Pancreas (tissue), 10 donors: ENCODE measurements at regions of chr15 and their contacts with region 1.

Region 1: DNA sequence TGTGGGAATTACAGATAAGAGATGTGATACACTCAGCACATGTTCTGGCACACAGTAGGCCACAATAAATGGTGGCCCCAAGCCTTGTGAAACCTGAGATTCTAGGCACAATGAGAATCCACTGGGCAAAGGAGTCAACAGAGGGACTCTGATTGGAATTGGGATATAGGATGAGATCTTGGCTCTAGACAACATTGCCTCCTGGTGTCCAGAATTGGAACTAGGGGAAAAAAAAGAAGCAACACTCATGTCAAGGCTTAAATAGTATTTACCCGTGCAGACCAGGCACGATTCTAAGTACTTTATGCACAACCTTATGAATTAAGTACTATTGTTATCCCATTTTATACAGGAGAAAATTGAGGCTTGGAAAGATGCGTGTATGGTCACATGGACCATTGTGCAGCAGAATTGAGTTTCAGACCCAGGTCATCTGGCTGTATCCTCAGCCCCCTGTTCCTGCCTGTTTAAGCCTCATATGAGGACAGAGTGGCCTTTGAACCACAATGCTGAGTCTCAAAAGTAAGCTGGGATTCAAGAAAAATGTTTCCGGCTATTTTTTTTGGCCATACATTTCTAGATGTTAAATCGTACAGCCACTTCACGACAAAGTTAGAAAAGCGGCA is 124.8 kb downstream of the SV2B start:
- DNase-seq: peak in 1 of 6 donors; percentile 39
- ATAC-seq: peak in 3 of 4 donors; percentile 86 to 90 (median 87)
- H3K4me3 ChIP-seq: no peak overlapping the region
- H3K27ac ChIP-seq: no peak overlapping the region
- H3K4me1 ChIP-seq: no peaks in the 10 kb centered on the region
- H3K27me3 ChIP-seq: no peaks in the 10 kb centered on the region
- CTCF ChIP-seq: peak; percentile 41 to 69 (median 60)

Region 2: GRCh38 chr15:91049378-91050127 is 175.3 kb before region 1 on chr15:
- intact Hi-C with region 1: loop called in 1 of 3 experiments (anchors 10 kb)
- DNase-seq: peak in 3 of 6 donors; percentile 45 to 76 (median 49)
- ATAC-seq: peak; percentile 90 to 99 (median 97)
- H3K4me3 ChIP-seq: no peak overlapping the region
- H3K27ac ChIP-seq: no peak overlapping the region
- H3K4me1 ChIP-seq: no peaks in the 10 kb centered on the region
- H3K27me3 ChIP-seq: no peaks in the 10 kb centered on the region
- CTCF ChIP-seq: peak in 3 of 4 donors; percentile 26 to 50 (median 34)

Region 3: DNA sequence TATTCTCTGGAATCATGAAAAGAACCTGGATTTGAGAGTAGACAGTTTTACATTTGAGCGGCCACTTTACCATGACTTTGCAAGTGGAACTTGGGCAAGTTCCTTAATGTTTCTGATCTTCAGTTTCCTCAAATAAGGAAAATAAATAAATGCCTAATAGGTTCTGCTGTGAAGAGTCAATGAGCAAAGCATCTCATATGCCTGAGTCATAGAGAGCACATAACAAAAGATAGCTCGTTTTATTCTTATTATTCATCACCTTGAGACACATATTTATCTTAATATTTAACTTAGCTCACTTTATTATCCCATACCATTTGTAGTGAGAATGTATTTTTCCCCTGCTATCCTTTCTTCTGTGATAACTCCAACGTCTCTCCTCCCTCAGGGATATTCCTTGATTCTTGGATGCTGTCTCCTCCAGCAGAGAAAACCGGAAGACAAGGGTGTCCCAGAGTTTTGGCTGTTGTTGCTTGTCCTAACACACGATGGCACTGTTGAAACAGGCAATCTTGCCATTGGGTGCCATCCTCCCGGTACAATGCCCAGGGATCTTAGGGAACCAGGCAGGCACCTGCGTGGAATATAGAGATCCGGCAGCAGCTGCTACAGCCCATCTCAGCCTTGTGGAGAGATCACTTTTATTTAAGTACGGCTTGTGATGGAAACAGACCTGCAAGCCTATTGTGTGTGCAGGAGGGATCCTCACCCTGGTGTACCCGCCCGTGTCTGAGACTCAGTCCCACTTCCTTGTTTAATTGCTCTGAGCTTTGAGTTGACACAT is 169.1 kb before region 1 on chr15:
- intact Hi-C with region 1: loop called (anchors 2 to 10 kb)
- DNase-seq: peak in 5 of 6 donors; percentile 51 to 77 (median 56)
- ATAC-seq: peak; percentile 88 to 99 (median 98)
- H3K4me3 ChIP-seq: no peak overlapping the region
- H3K27ac ChIP-seq: no peak overlapping the region
- H3K4me1 ChIP-seq: no peaks in the 10 kb centered on the region
- H3K27me3 ChIP-seq: no peaks in the 10 kb centered on the region
- CTCF ChIP-seq: peak; percentile 19 to 65 (median 58)

Region 4: GRCh38 chr15:91289324-91289723 is 64.5 kb after region 1 on chr15:
- intact Hi-C with region 1: no loop called
- DNase-seq: no peak
- ATAC-seq: no peak
- H3K4me3 ChIP-seq: no peak overlapping the region
- H3K27ac ChIP-seq: no peak overlapping the region
- H3K4me1 ChIP-seq: no peaks in the 10 kb centered on the region
- H3K27me3 ChIP-seq: no peaks in the 10 kb centered on the region
- CTCF ChIP-seq: no peak